ENCODE measurements at regions of chr2 and their contacts with region 1.

Region 1: GRCh38 chr2:221969087-221969829 is 329.5 kb downstream of the PAX3 start:
- DNase-seq: no peak
- ATAC-seq: peak in 3 of 8 donors; percentile 53 to 60 (median 56)
- H3K4me3 ChIP-seq: no peak overlapping the region
- H3K27ac ChIP-seq: no peak overlapping the region
- H3K4me1 ChIP-seq: no peaks in the 10 kb centered on the region
- H3K27me3 ChIP-seq: peaks cover 0 to 34% (median 6%) of the 10 kb centered on the region in 7 donors
- CTCF ChIP-seq: peak; percentile 11 to 78 (median 65)

Region 2: DNA sequence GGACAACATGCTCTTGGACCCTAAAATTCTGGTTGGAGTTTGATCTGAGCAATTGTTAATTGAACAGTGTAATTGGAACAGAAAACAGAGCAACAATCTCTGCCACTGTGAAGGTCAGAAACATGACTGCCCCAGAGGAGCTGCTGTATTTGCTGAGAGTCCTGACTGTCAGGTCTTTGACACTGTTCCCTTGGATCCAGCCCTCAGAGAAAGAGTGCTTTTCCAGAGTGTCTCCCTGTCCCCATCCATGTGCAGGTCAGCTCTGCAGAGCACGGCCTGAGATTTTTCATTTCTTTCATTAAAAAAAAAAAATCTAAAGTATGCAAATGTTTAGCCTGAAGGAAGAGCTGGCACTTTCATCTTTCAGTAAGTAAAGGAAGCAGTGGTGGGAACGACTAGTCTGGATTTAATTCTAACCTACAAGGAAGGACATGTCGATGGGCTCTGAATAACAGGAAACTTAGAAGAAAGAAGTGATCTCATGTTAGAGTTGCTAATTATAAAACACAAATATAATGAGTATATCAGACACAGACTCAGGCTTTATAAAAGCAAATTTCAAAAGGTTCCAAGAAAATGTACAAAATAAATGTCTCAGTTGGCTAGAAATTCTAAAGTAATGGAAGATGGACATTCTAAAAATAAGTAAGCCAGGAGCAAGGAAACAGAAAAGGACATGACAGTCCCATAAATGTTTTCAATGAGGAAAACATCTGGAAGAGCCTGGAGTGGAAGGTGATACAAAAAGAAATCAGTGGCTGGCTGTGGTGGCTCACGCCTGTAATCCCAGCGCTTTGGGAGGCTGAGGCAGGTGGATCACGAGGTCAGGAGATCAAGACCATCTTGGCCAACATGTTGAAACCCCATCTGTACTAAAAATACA is 1273.6 kb before region 1 on chr2:
- intact Hi-C with region 1: loop called in 1 of 10 experiments (anchors 10 kb)
- DNase-seq: no peak
- ATAC-seq: peak in 6 of 8 donors; percentile 20 to 88 (median 70)
- H3K4me3 ChIP-seq: no peak overlapping the region
- H3K27ac ChIP-seq: peak overlapping the region in 4 of 10 donors; percentile 21 to 48 (median 33)
- H3K4me1 ChIP-seq: peaks cover 0 to 9% (median 0%) of the 10 kb centered on the region in 9 donors
- H3K27me3 ChIP-seq: no peaks in the 10 kb centered on the region
- CTCF ChIP-seq: no peak

Region 3: DNA sequence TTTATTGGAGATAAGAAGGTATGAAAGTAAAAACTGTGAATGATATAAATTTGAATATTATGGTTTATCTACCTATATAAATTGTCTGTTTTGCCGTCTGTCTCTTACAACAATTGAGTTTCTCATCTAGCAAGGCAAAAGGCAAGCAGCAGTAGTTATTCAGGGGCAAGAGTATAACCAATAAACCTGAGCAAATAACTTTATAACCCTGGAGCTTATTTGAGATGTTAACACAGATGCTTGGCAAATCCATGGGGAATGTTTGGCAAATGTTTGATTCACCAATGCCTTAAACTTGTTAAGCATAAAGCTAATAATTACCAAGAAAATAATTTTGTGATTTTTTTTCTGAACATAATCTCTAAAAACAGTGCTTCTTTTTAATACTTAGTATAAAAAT is 387.3 kb before region 1 on chr2:
- intact Hi-C with region 1: loop called in 1 of 10 experiments (anchors 10 kb)
- DNase-seq: no peak
- ATAC-seq: no peak
- H3K4me3 ChIP-seq: no peak overlapping the region
- H3K27ac ChIP-seq: no peak overlapping the region
- H3K4me1 ChIP-seq: no peaks in the 10 kb centered on the region
- H3K27me3 ChIP-seq: peaks cover 0 to 61% (median 28%) of the 10 kb centered on the region in 7 donors
- CTCF ChIP-seq: no peak

Region 4: GRCh38 chr2:221596192-221596591 is 373.1 kb before region 1 on chr2:
- intact Hi-C with region 1: loop called in 1 of 10 experiments (anchors 10 kb)
- DNase-seq: no peak
- ATAC-seq: no peak
- H3K4me3 ChIP-seq: no peak overlapping the region
- H3K27ac ChIP-seq: no peak overlapping the region
- H3K4me1 ChIP-seq: no peaks in the 10 kb centered on the region
- H3K27me3 ChIP-seq: peaks cover 0 to 1% (median 0%) of the 10 kb centered on the region in 7 donors
- CTCF ChIP-seq: no peak

Measured in heart right ventricle (tissue), 16 donors.